ENCODE measurements at regions of chr7 and their contacts with region 1.

Region 1: GRCh38 chr7:35758421-35758820 is 42.4 kb upstream of the SEPTIN7 start:
- DNase-seq: no peak
- ATAC-seq: no peak

Region 2: GRCh38 chr7:35716038-35716803 is 42.2 kb before region 1 on chr7:
- intact Hi-C with region 1: loop called (anchors 5 kb)
- DNase-seq: peak; percentile 44
- ATAC-seq: peak; percentile 80